ENCODE measurements at regions of chr12 and their contacts with region 1.

Region 1: GRCh38 chr12:29317556-29318363 is 63.2 kb downstream of the ERGIC2 start:
- DNase-seq: no peak
- H3K4me3 ChIP-seq: no peak overlapping the region
- H3K27ac ChIP-seq: no peak overlapping the region
- H3K4me1 ChIP-seq: peaks cover 7% of the 10 kb centered on the region
- H3K27me3 ChIP-seq: no peaks in the 10 kb centered on the region
- CTCF ChIP-seq: peak; percentile 48 to 79 (median 59)
- POLR2A ChIP-seq: no peak

Region 2: DNA sequence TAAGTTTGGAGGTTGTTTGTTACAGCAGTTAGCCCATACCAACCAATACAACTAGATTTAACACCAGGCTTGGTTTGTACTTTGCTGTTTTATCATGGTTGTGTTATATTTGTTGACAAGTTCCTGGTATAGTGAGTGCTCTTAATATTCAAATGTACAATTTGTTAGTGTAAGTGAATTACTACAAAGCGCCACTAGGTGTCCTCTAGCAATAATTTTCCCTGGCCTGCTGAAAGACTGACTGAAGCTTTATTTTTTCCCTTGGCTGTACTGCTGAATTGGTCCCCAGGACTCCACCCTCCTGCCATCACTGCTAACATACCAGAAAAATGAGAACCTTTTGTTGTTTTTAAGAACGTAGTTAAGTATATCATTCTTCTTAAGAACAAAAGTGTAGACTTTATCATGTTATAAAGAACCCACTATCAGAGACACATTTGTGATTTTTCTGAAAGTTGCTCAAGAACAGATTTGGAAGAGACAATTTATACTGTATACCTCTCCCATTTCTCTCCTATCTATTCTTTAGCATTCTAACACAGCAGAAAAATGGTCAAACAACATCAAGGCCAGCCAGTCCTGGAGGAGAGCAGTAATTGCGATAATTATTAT is 244.0 kb before region 1 on chr12:
- intact Hi-C with region 1: loop called (anchors 10 kb)
- DNase-seq: no peak
- H3K4me3 ChIP-seq: no peak overlapping the region
- H3K27ac ChIP-seq: no peak overlapping the region
- H3K4me1 ChIP-seq: no peaks in the 10 kb centered on the region
- H3K27me3 ChIP-seq: no peaks in the 10 kb centered on the region
- CTCF ChIP-seq: peak; percentile 28 to 72 (median 42)
- POLR2A ChIP-seq: no peak

Measured in vagina (tissue), 2 donors.